Common myeloid progenitor, CD34-positive (primary cell): ENCODE measurements at regions of chr1 and their contacts with region 1.

Region 1: GRCh38 chr1:25232027-25232865 is at the start of gene SYF2:
- DNase-seq: peak; percentile 93 to 96 (median 95)
- H3K4me3 ChIP-seq: peak within 1 kb of the TSS; percentile 92 to 100 (median 93)
- H3K27ac ChIP-seq: peak within 1 kb of the TSS; percentile 84 to 96
- H3K4me1 ChIP-seq: peaks cover 13 to 40% (median 31%) of the 10 kb centered on the region in 4 experiments
- H3K27me3 ChIP-seq: no peaks in the 10 kb centered on the region

Region 2: DNA sequence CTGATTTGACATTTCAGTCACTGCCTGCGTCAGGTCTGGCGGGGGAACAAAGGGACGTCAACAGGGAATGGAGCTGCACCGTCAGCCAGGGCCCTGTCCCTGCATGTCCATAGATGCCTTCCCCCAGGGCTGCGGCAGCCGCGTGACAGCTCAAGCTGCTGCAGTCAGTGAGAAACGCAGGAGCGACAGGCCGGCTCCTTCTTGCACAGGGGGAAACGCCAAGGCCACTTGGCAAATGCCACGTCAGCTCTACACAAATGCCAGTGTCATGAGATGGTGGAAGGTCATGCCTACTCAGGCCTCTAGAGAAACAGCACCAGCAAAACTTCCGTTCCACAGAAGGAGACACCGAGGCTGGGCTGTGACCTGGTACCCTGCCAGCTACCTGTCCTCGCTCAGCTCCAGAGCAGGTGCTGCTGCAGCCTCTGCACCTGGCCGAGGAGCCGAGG is 37.6 kb before region 1 on chr1:
- CTCF ChIA-PET with region 1: no interaction called
- POLR2A ChIA-PET with region 1: no interaction called
- DNase-seq: no peak
- H3K4me3 ChIP-seq: no peak overlapping the region
- H3K27ac ChIP-seq: no peak overlapping the region
- H3K4me1 ChIP-seq: peaks cover 0 to 26% (median 20%) of the 10 kb centered on the region in 4 experiments
- H3K27me3 ChIP-seq: no peaks in the 10 kb centered on the region

Region 3: DNA sequence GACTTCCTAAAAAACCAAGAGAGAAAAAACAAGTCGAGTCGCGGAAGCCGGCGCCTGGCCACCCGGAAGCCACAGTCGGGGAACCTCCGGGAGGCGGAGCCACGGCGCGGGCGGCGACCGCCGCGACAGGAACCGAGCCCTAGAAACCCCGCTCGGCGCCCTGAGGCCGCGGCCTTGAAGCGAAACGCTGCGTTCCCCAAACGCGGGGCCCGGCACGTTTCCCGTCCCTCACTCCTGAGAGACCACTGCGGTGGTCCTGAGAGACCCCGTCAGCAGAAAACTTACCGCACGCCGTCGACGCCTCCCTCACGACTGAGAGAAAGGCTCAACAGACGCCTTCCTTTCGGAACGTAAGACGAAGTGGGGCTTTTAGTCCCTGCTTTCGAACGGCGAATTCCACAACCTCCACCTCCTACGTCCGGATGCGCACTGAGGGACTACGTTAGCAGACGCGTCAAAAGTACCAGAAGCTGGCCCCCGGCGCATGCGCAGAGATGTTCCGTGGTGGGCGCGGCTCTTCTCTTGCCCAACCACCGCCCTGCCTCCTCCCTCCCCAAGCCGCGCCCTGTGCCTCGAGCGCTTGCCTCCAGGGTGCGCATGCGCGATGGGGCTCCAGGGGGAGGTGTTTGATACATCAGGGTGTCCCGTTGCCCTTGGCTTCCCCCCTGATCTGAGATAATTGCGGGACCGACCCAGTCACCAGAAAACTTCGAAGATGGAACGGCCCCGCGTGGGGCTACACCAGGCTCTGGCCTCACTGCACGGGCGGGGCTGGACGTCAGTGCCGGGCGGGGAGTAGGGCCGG is 15.0 kb after region 1 on chr1 and contains the start of gene RSRP1:
- CTCF ChIA-PET with region 1: interaction called, 7 read pairs
- POLR2A ChIA-PET with region 1: interaction called, 24 read pairs
- DNase-seq: peak; percentile 98 to 99 (median 99)
- H3K4me3 ChIP-seq: peak within 1 kb of the TSS; percentile 88 to 100 (median 96)
- H3K27ac ChIP-seq: peak within 1 kb of the TSS; percentile 95 to 99
- H3K4me1 ChIP-seq: peaks cover 14 to 27% (median 22%) of the 10 kb centered on the region in 4 experiments
- H3K27me3 ChIP-seq: no peaks in the 10 kb centered on the region

Region 4: DNA sequence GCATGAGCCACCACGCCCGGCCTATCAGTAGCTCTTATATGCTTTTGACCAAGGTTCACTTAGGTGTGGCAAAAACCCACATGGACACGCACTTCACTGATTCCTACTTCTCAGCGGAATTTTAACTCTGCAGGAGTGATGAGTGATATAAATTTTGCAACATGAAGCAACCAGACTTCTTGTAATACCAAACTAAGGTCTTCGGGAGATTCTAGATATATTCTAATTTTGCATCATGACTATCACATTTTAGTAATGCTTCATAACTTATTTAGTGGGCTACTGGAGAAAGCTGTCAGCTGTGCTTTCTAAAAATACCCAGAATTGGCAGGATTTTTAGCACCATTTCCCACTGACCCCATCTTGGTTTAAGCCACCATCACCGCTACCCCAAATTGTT is 160.6 kb after region 1 on chr1:
- CTCF ChIA-PET with region 1: no interaction called
- POLR2A ChIA-PET with region 1: no interaction called
- DNase-seq: no peak
- H3K4me3 ChIP-seq: no peak overlapping the region
- H3K27ac ChIP-seq: no peak overlapping the region
- H3K4me1 ChIP-seq: no peaks in the 10 kb centered on the region
- H3K27me3 ChIP-seq: no peaks in the 10 kb centered on the region

Region 5: GRCh38 chr1:25469177-25469576 is 236.9 kb after region 1 on chr1:
- CTCF ChIA-PET with region 1: no interaction called
- POLR2A ChIA-PET with region 1: no interaction called
- DNase-seq: no peak
- H3K4me3 ChIP-seq: no peak overlapping the region
- H3K27ac ChIP-seq: no peak overlapping the region
- H3K4me1 ChIP-seq: peaks cover 0 to 21% (median 7%) of the 10 kb centered on the region in 4 experiments
- H3K27me3 ChIP-seq: no peaks in the 10 kb centered on the region

Region 6: DNA sequence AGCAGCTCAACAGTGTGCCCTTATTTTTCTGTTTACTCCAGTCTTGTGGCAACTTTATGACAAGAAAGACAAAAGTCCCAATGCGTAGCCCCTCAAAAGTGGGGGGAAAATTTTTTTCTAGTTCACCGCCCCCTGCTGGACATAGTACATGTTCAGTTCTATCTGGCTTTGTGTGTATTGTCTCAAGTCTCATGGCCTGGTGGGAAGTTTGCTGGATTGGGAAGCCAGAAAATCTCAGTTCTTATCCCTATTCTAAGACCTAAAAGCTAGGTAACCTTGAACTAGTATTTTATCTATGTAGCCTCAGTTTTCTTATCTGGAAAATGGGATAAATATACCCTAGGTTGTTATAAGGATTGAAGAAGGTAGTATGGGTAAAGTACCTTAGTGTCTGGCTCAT is 255.4 kb after region 1 on chr1:
- CTCF ChIA-PET with region 1: no interaction called
- POLR2A ChIA-PET with region 1: no interaction called
- DNase-seq: peak in 2 of 3 donors; percentile 50 to 55
- H3K4me3 ChIP-seq: no peak overlapping the region
- H3K27ac ChIP-seq: no peak overlapping the region
- H3K4me1 ChIP-seq: peaks cover 11 to 15% (median 13%) of the 10 kb centered on the region in 4 experiments
- H3K27me3 ChIP-seq: no peaks in the 10 kb centered on the region